Naive thymus-derived CD4-positive, alpha-beta T cell (primary cell): ENCODE measurements at regions of chr11 and their contacts with region 1.

Region 1: GRCh38 chr11:10653926-10654810 is 39.4 kb downstream of the IRAG1 start:
- DNase-seq: peak in 6 of 9 donors; percentile 11 to 63 (median 56)
- ATAC-seq: peak; percentile 89
- H3K4me3 ChIP-seq: no peak overlapping the region
- H3K4me3 Mint-ChIP-seq: no peak overlapping the region
- H3K27ac ChIP-seq: no peak overlapping the region
- H3K27ac Mint-ChIP-seq: peak overlapping the region in 1 of 9 donors; percentile 25
- H3K4me1 ChIP-seq: no peaks in the 10 kb centered on the region
- H3K4me1 Mint-ChIP-seq: peaks cover 0 to 33% (median 0%) of the 10 kb centered on the region in 7 donors
- H3K27me3 ChIP-seq: no peaks in the 10 kb centered on the region
- H3K27me3 Mint-ChIP-seq: no peaks in the 10 kb centered on the region

Region 2: DNA sequence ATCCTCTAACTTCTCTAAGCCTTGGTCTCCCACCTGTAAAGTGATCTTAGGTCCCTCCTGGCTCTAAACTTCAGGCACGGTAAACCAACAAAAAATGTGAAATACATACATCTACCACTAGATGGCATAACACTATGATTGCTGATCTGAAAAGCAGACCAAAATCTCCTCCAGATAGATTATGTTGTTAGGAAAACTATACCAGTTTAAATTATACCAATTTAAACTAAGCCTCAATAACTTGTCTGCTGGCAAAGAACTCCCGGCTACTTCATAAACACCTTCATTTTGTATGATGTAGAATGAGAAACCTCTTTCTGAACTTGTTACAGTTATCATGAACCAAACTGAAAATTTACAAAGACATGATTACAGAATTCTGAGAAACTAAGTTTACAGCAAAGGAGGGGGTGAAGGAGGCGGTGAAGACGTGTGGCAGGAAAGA is 446.0 kb before region 1 on chr11:
- CTCF ChIA-PET with region 1: no interaction called
- POLR2A ChIA-PET with region 1: no interaction called
- intact Hi-C with region 1: loop called in 1 of 2 experiments (anchors 10 kb)
- DNase-seq: peak in 7 of 9 donors; percentile 10 to 55 (median 44)
- ATAC-seq: peak; percentile 82
- H3K4me3 ChIP-seq: no peak overlapping the region
- H3K4me3 Mint-ChIP-seq: no peak overlapping the region
- H3K27ac ChIP-seq: no peak overlapping the region
- H3K27ac Mint-ChIP-seq: no peak overlapping the region
- H3K4me1 ChIP-seq: no peaks in the 10 kb centered on the region
- H3K4me1 Mint-ChIP-seq: no peaks in the 10 kb centered on the region
- H3K27me3 ChIP-seq: no peaks in the 10 kb centered on the region
- H3K27me3 Mint-ChIP-seq: peaks cover 0 to 16% (median 0%) of the 10 kb centered on the region in 5 donors

Region 3: GRCh38 chr11:10405855-10406592 is 248.1 kb before region 1 on chr11:
- CTCF ChIA-PET with region 1: interaction called, 81 read pairs
- POLR2A ChIA-PET with region 1: interaction called, 3 read pairs
- intact Hi-C with region 1: loop called (anchors 1 kb)
- DNase-seq: peak in 8 of 9 donors; percentile 30 to 56 (median 46)
- ATAC-seq: peak; percentile 82
- H3K4me3 ChIP-seq: no peak overlapping the region
- H3K4me3 Mint-ChIP-seq: no peak overlapping the region
- H3K27ac ChIP-seq: no peak overlapping the region
- H3K27ac Mint-ChIP-seq: peak overlapping the region in 1 of 9 donors; percentile 50
- H3K4me1 ChIP-seq: peaks cover 4 to 12% of the 10 kb centered on the region in 2 donors
- H3K4me1 Mint-ChIP-seq: peaks cover 5 to 34% (median 27%) of the 10 kb centered on the region in 7 donors
- H3K27me3 ChIP-seq: no peaks in the 10 kb centered on the region
- H3K27me3 Mint-ChIP-seq: peaks cover 0 to 2% (median 0%) of the 10 kb centered on the region in 5 donors

Region 4: DNA sequence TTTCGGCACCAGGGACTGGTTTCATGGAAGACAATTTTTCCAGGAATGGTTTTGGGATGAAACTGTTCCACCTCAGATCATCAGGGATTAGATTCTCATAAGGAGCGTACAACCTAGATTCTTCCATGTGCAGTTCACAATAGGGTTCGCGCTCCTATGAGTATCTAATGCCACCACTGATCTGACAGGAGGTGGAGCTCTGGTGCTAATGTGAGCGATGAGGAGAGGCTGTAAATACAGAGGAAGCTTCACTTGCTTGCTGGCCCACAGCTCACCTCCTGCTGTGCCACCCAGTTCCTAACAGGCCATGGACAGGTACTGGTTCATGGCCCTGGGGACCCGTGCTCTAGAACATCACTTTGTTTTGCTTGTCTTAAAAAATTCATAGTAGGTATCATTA is 240.9 kb before region 1 on chr11:
- CTCF ChIA-PET with region 1: interaction called, 81 read pairs
- POLR2A ChIA-PET with region 1: interaction called, 9 read pairs
- intact Hi-C with region 1: loop called (anchors 1 kb)
- DNase-seq: peak in 7 of 9 donors; percentile 35 to 65 (median 57)
- ATAC-seq: peak; percentile 81
- H3K4me3 ChIP-seq: no peak overlapping the region
- H3K4me3 Mint-ChIP-seq: no peak overlapping the region
- H3K27ac ChIP-seq: no peak overlapping the region
- H3K27ac Mint-ChIP-seq: no peak overlapping the region
- H3K4me1 ChIP-seq: peaks cover 12 to 27% of the 10 kb centered on the region in 2 donors
- H3K4me1 Mint-ChIP-seq: peaks cover 29 to 47% (median 39%) of the 10 kb centered on the region in 7 donors
- H3K27me3 ChIP-seq: no peaks in the 10 kb centered on the region
- H3K27me3 Mint-ChIP-seq: peaks cover 0 to 16% (median 0%) of the 10 kb centered on the region in 5 donors

Region 5: GRCh38 chr11:10514210-10514609 is 140.0 kb before region 1 on chr11:
- CTCF ChIA-PET with region 1: interaction called, 4 read pairs
- POLR2A ChIA-PET with region 1: no interaction called
- intact Hi-C with region 1: loop called in 1 of 2 experiments (anchors 1 kb)
- DNase-seq: peak in 1 of 9 donors; percentile 4
- ATAC-seq: no peak
- H3K4me3 ChIP-seq: no peak overlapping the region
- H3K4me3 Mint-ChIP-seq: no peak overlapping the region
- H3K27ac ChIP-seq: no peak overlapping the region
- H3K27ac Mint-ChIP-seq: peak overlapping the region in 3 of 9 donors; percentile 0 to 48 (median 30)
- H3K4me1 ChIP-seq: no peaks in the 10 kb centered on the region
- H3K4me1 Mint-ChIP-seq: peaks cover 0 to 5% (median 0%) of the 10 kb centered on the region in 7 donors
- H3K27me3 ChIP-seq: no peaks in the 10 kb centered on the region
- H3K27me3 Mint-ChIP-seq: no peaks in the 10 kb centered on the region

Region 6: GRCh38 chr11:10597877-10598351 is 56.3 kb before region 1 on chr11:
- CTCF ChIA-PET with region 1: no interaction called
- POLR2A ChIA-PET with region 1: no interaction called
- intact Hi-C with region 1: no loop called
- DNase-seq: no peak
- ATAC-seq: no peak
- H3K4me3 ChIP-seq: no peak overlapping the region
- H3K4me3 Mint-ChIP-seq: no peak overlapping the region
- H3K27ac ChIP-seq: no peak overlapping the region
- H3K27ac Mint-ChIP-seq: no peak overlapping the region
- H3K4me1 ChIP-seq: no peaks in the 10 kb centered on the region
- H3K4me1 Mint-ChIP-seq: peaks cover 0 to 8% (median 0%) of the 10 kb centered on the region in 7 donors
- H3K27me3 ChIP-seq: no peaks in the 10 kb centered on the region
- H3K27me3 Mint-ChIP-seq: peaks cover 0 to 8% (median 0%) of the 10 kb centered on the region in 5 donors

Region 7: DNA sequence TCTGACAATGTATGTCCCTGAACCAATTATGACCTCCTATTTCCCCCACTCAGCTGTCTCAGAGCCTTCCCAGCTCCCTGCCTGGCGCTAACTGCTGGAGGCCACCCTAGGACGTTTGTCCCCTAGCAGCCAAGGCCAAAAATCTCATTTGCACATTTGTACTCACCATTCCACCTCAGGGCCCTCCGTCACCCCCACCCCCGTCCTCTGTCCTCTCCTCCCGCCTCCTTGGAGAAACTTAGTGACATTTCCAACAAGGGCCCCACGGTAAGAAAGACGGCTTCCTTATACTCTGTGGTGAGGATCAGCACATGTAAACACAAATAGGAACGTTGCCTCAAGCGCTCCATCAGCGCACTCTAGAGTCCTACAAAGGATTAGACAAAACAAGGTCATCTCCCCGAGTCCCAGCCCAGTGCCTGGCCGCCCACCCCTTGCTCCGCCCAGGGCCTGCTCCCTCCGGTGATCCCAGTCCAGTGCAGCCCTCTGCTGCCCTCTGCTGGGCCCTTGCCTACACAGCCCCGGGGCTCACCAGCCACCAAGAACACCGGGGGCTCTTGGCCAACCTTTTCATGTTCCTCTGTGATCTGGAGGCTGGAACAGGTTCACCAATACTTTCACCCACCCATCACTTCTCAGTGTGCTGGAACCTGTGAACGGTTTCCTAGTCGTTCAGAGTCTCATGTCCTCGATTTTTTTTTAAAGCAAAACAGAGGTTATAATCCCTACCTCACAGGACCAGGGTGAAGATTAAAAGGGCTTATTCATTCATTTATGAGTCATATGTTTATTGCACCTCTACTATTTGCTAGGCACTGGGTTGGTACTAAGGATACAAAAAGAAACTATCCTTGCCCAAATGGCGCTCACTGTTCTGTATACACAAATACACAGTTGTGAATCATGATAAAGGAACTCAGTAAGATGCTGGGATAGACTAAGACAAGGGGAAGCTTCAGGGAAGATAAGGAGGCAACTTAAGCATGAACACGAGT is 81.6 kb after region 1 on chr11:
- CTCF ChIA-PET with region 1: no interaction called
- POLR2A ChIA-PET with region 1: no interaction called
- intact Hi-C with region 1: loop called (anchors 1 to 2 kb)
- DNase-seq: peak; percentile 62 to 92 (median 77)
- ATAC-seq: peak; percentile 100
- H3K4me3 ChIP-seq: no peak overlapping the region
- H3K4me3 Mint-ChIP-seq: peak overlapping the region in 8 of 10 donors; percentile 8 to 75 (median 62)
- H3K27ac ChIP-seq: no peak overlapping the region
- H3K27ac Mint-ChIP-seq: peak overlapping the region in 5 of 9 donors; percentile 31 to 71 (median 59)
- H3K4me1 ChIP-seq: peaks cover 0 to 4% of the 10 kb centered on the region in 2 donors
- H3K4me1 Mint-ChIP-seq: peaks cover 5 to 13% (median 8%) of the 10 kb centered on the region in 7 donors
- H3K27me3 ChIP-seq: no peaks in the 10 kb centered on the region
- H3K27me3 Mint-ChIP-seq: peaks cover 4 to 19% (median 12%) of the 10 kb centered on the region in 5 donors